ENCODE measurements at regions of chr9 and their contacts with region 1.

Region 1: GRCh38 chr9:23837038-23837437 is 11.0 kb upstream of the ELAVL2 start:
- DNase-seq: no peak
- ATAC-seq: peak; percentile 17; the same call in 2 of the 3 replicates
- H3K4me3 ChIP-seq: no peak overlapping the region
- H3K27ac ChIP-seq: no peak overlapping the region
- H3K4me1 ChIP-seq: no peaks in the 10 kb centered on the region
- H3K27me3 ChIP-seq: no peaks in the 10 kb centered on the region
- CTCF ChIP-seq: no peak
- EP300 ChIP-seq: no peak
- POLR2A ChIP-seq: no peak
- RAD21 ChIP-seq: no peak

Region 2: GRCh38 chr9:23850690-23851629 is 13.9 kb after region 1 on chr9:
- CTCF ChIA-PET with region 1: no interaction called
- POLR2A ChIA-PET with region 1: no interaction called
- RAD21 ChIA-PET with region 1: interaction called, 6 read pairs
- SMC1A ChIA-PET with region 1: interaction called, 10 read pairs
- in situ Hi-C with region 1: no loop called
- intact Hi-C with region 1: no loop called
- DNase-seq: no peak
- ATAC-seq: peak; percentile 88
- H3K4me3 ChIP-seq: no peak overlapping the region
- H3K27ac ChIP-seq: no peak overlapping the region
- H3K4me1 ChIP-seq: no peaks in the 10 kb centered on the region
- H3K27me3 ChIP-seq: no peaks in the 10 kb centered on the region
- CTCF ChIP-seq: no peak
- EP300 ChIP-seq: no peak
- POLR2A ChIP-seq: no peak
- RAD21 ChIP-seq: no peak

Region 3: DNA sequence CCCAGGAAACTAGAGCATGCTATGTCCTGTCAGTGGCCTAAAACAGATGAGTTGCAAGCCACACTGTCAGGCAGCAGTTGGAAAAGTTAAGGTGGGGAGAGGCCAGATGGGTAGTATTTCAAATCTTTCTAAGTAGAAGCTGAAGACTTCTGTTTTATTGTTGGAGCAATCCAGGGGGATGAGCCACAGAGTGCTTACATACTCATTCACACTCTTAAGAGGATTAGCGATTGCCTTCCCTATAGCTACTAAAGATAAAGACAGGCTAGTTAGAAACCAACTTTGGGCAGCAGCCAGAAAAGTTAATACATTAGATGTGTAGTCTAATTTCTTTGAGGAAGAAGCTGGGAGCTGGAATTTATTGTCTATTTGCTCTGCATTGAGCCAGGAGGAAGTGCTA is 50.7 kb after region 1 on chr9:
- CTCF ChIA-PET with region 1: no interaction called
- POLR2A ChIA-PET with region 1: no interaction called
- RAD21 ChIA-PET with region 1: no interaction called
- SMC1A ChIA-PET with region 1: no interaction called
- in situ Hi-C with region 1: no loop called
- intact Hi-C with region 1: no loop called
- DNase-seq: no peak
- ATAC-seq: no peak
- H3K4me3 ChIP-seq: no peak overlapping the region
- H3K27ac ChIP-seq: no peak overlapping the region
- H3K4me1 ChIP-seq: no peaks in the 10 kb centered on the region
- H3K27me3 ChIP-seq: no peaks in the 10 kb centered on the region
- CTCF ChIP-seq: no peak
- EP300 ChIP-seq: no peak
- POLR2A ChIP-seq: no peak
- RAD21 ChIP-seq: no peak

Region 4: GRCh38 chr9:23914431-23915003 is 77.5 kb after region 1 on chr9:
- CTCF ChIA-PET with region 1: no interaction called
- POLR2A ChIA-PET with region 1: no interaction called
- RAD21 ChIA-PET with region 1: no interaction called
- SMC1A ChIA-PET with region 1: no interaction called
- in situ Hi-C with region 1: no loop called
- intact Hi-C with region 1: no loop called
- DNase-seq: no peak
- ATAC-seq: no peak
- H3K4me3 ChIP-seq: no peak overlapping the region
- H3K27ac ChIP-seq: no peak overlapping the region
- H3K4me1 ChIP-seq: no peaks in the 10 kb centered on the region
- H3K27me3 ChIP-seq: no peaks in the 10 kb centered on the region
- CTCF ChIP-seq: no peak
- EP300 ChIP-seq: no peak
- POLR2A ChIP-seq: no peak
- RAD21 ChIP-seq: no peak

Region 5: DNA sequence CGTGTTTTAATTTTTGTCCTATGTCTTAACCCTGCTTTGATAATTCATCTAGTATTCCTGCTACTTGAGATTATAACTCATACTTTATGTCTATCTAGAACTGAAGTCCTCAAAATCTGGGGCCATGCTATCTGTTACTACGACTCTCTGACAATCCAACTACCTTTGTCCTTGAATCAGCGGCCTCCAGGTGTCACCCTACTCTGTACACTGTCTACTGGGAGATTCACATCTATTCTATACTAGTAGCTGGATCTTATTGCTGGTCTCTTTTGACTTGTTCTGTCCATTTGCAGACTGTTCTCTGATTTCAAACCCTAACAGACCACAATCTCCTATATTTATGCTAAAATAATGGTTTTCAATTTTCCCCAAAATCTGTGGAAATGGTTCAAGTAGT is 214.5 kb after region 1 on chr9:
- CTCF ChIA-PET with region 1: no interaction called
- POLR2A ChIA-PET with region 1: no interaction called
- RAD21 ChIA-PET with region 1: no interaction called
- SMC1A ChIA-PET with region 1: no interaction called
- in situ Hi-C with region 1: no loop called
- intact Hi-C with region 1: no loop called
- DNase-seq: no peak
- ATAC-seq: no peak
- H3K4me3 ChIP-seq: no peak overlapping the region
- H3K27ac ChIP-seq: no peak overlapping the region
- H3K4me1 ChIP-seq: no peaks in the 10 kb centered on the region
- H3K27me3 ChIP-seq: no peaks in the 10 kb centered on the region
- CTCF ChIP-seq: no peak
- EP300 ChIP-seq: no peak
- POLR2A ChIP-seq: no peak
- RAD21 ChIP-seq: no peak

Measured in GM12878 (cell line).